IMR-90 (cell line): ENCODE measurements at regions of chr19 and their contacts with region 1.

Region 1: DNA sequence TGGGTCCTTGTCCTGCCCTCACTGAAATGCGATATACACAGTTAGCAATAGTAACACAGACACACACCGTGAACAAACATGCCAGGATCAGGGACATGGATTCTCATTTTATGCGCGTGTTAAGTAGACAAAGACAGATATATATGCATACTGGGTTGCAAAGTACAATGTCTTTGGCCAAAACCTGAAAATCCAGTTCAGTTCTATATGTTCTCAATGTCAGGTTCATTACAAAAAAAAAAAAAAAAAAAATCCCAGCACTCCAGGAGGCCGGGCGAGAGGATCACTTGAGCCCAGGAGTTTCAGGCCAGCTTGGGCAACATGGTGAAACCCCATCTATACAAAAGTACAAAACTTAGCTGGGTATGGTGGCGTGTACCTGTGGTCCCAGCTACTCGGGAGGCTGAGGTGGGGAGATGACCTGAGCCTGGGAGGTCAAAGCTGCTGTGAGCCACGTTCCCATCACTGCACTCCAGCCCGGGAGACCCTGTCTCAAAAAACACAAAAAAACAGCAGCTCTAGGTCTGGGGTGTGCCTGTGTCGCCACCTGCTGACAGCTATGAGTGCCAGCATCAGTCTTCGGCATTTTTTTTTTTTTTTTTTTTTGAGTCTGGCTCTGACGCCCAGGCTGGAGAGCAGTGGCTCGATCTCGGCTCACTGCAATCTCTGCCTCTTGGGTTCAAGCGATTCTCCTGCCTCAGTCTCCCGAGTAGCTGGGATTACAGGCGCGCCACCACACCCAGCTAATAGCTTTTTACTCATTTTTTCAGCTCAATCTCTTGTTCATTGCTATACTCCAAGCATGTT is 10.3 kb downstream of the AP2S1 start:
- DNase-seq: peak; percentile 70
- ATAC-seq: peak; percentile 68
- H3K4me3 ChIP-seq: no peak overlapping the region
- H3K27ac ChIP-seq: peak overlapping the region; percentile 56; the same call in 1 of the 2 replicates
- H3K4me1 ChIP-seq: peaks cover 7% of the 10 kb centered on the region
- H3K27me3 ChIP-seq: no peaks in the 10 kb centered on the region
- CTCF ChIP-seq: peak; percentile 90
- POLR2A ChIP-seq: no peak
- RAD21 ChIP-seq: peak; percentile 88

Region 2: GRCh38 chr19:46661020-46661731 is 179.2 kb before region 1 on chr19 and contains the start of gene DACT3:
- CTCF ChIA-PET with region 1: no interaction called
- POLR2A ChIA-PET with region 1: interaction called, 11 read pairs
- dilution Hi-C with region 1: no loop called
- in situ Hi-C with region 1: no loop called
- intact Hi-C with region 1: no loop called
- DNase-seq: peak; percentile 100
- ATAC-seq: peak; percentile 94
- H3K4me3 ChIP-seq: peak within 1 kb of the TSS; percentile 64
- H3K27ac ChIP-seq: peak within 1 kb of the TSS; percentile 39
- H3K4me1 ChIP-seq: peaks cover 4% of the 10 kb centered on the region
- H3K27me3 ChIP-seq: no peaks in the 10 kb centered on the region; the same call in 1 of the 2 replicates
- CTCF ChIP-seq: no peak
- POLR2A ChIP-seq: no peak
- RAD21 ChIP-seq: no peak
- total RNA-seq, gene DACT3: 1.6 and 1.9 TPM in 2 replicates

Region 3: DNA sequence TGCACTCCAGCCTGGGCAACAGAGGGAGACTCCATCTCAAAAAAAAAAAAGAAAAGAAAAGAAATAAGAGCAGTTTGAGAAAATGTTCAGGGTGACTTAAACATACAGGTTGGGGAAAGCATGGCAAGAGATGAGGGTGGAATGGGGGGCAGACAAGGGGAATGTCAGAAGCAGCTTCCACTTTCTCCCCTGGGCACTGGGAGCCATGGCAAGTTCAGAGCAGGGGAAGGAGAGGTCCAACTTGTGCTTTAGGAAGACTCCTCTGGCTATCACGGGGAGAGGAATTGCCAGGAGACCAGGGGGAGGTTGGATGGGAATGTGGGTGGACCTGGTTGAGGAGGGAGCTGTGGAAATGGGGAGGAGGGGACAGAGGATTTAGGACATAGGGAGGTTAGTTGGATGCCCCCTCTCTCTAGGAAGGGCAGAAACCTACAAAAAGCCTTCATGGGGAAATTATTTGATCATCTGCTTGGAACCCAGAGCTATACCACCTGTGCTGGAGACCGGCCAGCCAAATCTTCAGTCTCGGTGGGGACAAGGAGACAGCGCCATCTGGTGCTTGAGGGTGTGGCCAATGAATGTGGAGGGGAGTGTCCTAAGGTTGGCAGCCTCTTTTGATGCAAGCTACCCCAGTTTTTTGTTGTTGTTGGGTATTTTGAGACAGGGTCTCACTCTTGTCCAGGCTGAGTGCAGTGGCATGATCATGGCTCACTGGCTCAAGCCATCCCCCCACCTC is 86.8 kb before region 1 on chr19:
- CTCF ChIA-PET with region 1: interaction called, 16 read pairs
- POLR2A ChIA-PET with region 1: no interaction called
- dilution Hi-C with region 1: no loop called
- in situ Hi-C with region 1: loop called (anchors 5 kb)
- intact Hi-C with region 1: loop called (anchors 1 kb)
- DNase-seq: no peak
- ATAC-seq: no peak
- H3K4me3 ChIP-seq: no peak overlapping the region
- H3K27ac ChIP-seq: no peak overlapping the region
- H3K4me1 ChIP-seq: peaks cover 8% of the 10 kb centered on the region
- H3K27me3 ChIP-seq: no peaks in the 10 kb centered on the region
- CTCF ChIP-seq: peak; percentile 40
- POLR2A ChIP-seq: no peak
- RAD21 ChIP-seq: peak; percentile 25; the same call in 1 of the 2 replicates

Region 4: DNA sequence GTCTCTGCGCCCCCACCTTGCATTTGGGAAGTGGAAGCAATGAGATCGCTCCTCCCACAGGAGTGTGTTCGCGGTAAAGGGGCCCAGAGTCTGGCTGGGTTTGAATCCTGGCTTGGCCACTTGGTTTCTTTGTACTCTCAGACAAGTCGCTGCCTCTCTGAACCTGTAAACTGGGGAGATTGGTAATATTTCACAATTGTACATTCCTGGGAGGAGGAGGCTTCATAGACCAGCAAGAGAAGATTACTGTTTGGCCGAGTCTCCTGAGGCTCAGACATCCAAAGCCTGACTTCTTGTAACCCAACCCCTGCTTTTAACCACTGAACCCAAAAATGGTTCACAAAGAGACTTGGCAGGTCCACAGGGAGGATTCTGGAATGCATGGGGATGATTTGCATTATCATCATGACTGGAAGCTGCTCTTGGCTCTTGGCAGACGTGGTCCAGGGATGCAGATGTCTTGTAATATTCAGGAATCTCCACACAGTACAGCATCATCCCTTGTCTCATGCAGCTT is 80.5 kb before region 1 on chr19:
- CTCF ChIA-PET with region 1: interaction called, 16 read pairs
- POLR2A ChIA-PET with region 1: no interaction called
- dilution Hi-C with region 1: no loop called
- in situ Hi-C with region 1: loop called (anchors 5 kb)
- intact Hi-C with region 1: loop called (anchors 1 kb)
- DNase-seq: peak; percentile 97
- ATAC-seq: peak; percentile 71
- H3K4me3 ChIP-seq: no peak overlapping the region
- H3K27ac ChIP-seq: peak overlapping the region; percentile 85; the same call in 1 of the 2 replicates
- H3K4me1 ChIP-seq: peaks cover 12% of the 10 kb centered on the region
- H3K27me3 ChIP-seq: no peaks in the 10 kb centered on the region
- CTCF ChIP-seq: no peak
- POLR2A ChIP-seq: no peak
- RAD21 ChIP-seq: no peak

Region 5: DNA sequence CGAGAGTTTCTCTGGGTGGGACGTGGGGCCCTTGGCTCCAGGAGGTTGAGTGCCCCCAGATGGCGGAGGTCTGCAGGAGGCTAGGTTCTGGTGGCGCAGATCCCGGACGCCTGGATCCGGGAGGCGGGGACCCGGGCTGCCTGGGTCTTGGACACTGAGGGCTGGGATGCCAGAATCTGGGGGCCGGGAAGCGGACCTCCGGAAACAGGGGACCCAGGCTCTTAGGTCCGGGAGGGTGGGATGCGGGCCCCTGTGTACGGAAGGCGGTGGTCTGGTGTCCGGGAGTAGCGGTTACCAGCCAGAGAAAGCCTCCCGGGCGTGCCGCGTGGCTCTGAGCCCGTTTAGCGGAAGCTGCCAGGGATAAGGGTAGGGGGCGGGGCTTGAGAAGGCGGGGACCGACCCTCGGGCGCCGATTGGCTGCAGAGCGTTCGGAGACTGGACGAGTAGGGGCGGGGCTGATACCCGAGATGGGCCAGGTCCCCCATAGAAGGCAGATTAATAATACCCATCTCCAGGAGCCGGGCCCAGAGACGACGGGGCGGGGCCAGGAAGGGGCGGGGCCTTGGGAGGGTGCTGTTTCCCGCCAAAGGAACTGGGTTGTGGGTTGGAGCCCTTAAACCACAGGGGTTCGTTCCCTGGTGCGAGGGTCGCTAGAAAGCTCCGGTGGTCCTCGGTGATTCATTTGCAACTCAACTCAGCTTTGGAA is 51.9 kb before region 1 on chr19 and contains the start of gene SLC1A5:
- CTCF ChIA-PET with region 1: interaction called, 6 read pairs
- POLR2A ChIA-PET with region 1: interaction called, 3 read pairs
- dilution Hi-C with region 1: no loop called
- in situ Hi-C with region 1: loop called (anchors 10 kb)
- intact Hi-C with region 1: loop called (anchors 1 kb)
- DNase-seq: peak; percentile 96
- ATAC-seq: peak; percentile 76
- H3K4me3 ChIP-seq: peak within 1 kb of the TSS; percentile 97
- H3K27ac ChIP-seq: peak within 1 kb of the TSS; percentile 84
- H3K4me1 ChIP-seq: peaks cover 14% of the 10 kb centered on the region
- H3K27me3 ChIP-seq: no peaks in the 10 kb centered on the region
- CTCF ChIP-seq: no peak
- POLR2A ChIP-seq: peak; percentile 100
- RAD21 ChIP-seq: no peak
- total RNA-seq, gene SLC1A5: 105 and 142 TPM in 2 replicates